Activated T-helper 1 cell treated with anti-CD3 and anti-CD28 coated beads, Interleukin-12 subunit alpha, Interleukin-12 subunit beta, Interleukin-2, Interleukin-4 antibody, amounts not matched to agents 30 ng/mL and 10 ng/mL and 1 ng/mL, durations not matched to agents 14 hours and 24 hours and 36 hours (primary cell): ENCODE measurements at regions of chr9 and their contacts with region 1.

Region 1: DNA sequence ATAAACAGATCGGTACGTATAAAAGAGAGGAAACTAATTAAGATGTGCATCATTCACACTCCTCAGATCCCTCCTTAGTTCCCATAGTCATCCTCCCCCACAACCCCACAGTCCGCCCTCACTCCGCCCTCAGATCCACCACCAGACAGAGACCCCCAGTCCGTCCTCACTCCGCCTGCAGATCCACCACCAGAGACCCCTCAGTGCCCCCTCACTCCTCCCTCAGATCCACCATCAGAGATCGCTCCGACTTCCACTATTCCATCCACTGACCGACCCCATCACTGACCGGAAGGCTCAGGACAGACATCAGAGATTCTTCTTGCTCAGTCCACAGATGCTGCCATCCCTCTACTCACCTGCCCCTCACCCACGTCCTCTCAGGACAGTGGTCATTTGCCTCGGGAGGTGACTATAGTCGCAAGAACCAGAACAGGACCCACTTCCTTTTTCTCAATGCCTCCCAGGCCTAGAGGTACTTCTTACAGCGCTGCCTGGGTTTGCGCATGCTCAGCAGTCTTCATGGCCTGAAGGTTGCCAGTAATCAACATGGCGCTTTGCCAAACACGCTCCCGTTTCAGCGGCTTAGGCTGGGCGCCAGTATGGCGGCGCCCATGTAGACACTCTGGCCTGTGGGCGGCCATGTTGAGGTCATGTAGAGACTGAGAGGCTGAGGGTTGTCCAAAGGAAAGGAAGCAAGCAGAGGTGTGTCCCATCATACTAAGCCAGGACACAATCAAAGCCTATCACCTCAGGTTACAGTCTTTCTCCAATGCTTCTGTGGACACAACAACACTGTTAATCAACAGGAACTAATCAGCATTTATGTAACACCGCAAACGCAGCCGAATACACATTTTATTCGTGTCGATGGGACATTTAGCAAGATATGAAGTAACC is at the start of gene ZNF484:
- DNase-seq: peak; percentile 92
- H3K4me3 Mint-ChIP-seq: peak within 1 kb of the TSS; percentile 92
- H3K27ac Mint-ChIP-seq: peak within 1 kb of the TSS; percentile 97
- H3K4me1 Mint-ChIP-seq: peaks cover 46% of the 10 kb centered on the region
- H3K27me3 Mint-ChIP-seq: peaks cover 4% of the 10 kb centered on the region
- total RNA-seq, gene ZNF484: 7.2 and 8.1 TPM in 2 replicates

Region 2: GRCh38 chr9:92115071-92115858 is 762.5 kb before region 1 on chr9 and contains the start of gene SPTLC1:
- intact Hi-C with region 1: loop called (anchors 5 kb)
- DNase-seq: peak; percentile 93
- H3K4me3 Mint-ChIP-seq: peak within 1 kb of the TSS; percentile 97
- H3K27ac Mint-ChIP-seq: peak within 1 kb of the TSS; percentile 95
- H3K4me1 Mint-ChIP-seq: peaks cover 47% of the 10 kb centered on the region
- H3K27me3 Mint-ChIP-seq: no peaks in the 10 kb centered on the region
- total RNA-seq, gene SPTLC1: 60.2 and 62.3 TPM in 2 replicates

Region 3: DNA sequence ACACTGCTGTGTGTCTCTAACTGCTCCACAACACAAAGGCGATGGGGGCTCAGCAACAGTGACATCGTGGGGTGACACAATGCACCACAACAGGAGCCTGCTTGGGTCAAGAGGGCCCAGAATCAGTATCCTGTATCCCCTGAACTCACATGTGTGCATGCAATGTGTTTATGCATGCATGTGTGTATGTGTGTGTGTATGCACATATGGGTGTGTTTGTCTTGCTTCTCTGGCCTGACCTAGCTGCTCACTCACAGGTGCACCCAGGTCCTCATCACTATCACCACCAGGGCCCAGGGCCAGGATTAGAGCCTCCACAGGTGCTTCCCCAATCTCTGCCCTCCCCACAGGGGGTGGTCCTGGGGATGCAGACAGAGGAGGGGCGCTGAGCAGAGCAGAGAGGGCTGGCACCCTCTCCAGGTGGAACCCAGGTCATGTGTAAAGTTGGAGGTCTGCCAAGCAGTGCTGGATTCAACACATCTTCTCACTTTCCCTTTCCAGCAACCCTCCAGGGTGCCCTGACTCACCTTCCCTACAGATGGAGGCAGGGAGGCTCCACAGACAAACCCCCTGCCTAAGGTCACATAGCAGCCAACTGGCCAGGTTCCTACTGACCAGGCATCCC is 18.1 kb after region 1 on chr9:
- intact Hi-C with region 1: no loop called
- DNase-seq: no peak
- H3K4me3 Mint-ChIP-seq: no peak overlapping the region
- H3K27ac Mint-ChIP-seq: no peak overlapping the region
- H3K4me1 Mint-ChIP-seq: peaks cover 9% of the 10 kb centered on the region
- H3K27me3 Mint-ChIP-seq: peaks cover 10% of the 10 kb centered on the region

Region 4: DNA sequence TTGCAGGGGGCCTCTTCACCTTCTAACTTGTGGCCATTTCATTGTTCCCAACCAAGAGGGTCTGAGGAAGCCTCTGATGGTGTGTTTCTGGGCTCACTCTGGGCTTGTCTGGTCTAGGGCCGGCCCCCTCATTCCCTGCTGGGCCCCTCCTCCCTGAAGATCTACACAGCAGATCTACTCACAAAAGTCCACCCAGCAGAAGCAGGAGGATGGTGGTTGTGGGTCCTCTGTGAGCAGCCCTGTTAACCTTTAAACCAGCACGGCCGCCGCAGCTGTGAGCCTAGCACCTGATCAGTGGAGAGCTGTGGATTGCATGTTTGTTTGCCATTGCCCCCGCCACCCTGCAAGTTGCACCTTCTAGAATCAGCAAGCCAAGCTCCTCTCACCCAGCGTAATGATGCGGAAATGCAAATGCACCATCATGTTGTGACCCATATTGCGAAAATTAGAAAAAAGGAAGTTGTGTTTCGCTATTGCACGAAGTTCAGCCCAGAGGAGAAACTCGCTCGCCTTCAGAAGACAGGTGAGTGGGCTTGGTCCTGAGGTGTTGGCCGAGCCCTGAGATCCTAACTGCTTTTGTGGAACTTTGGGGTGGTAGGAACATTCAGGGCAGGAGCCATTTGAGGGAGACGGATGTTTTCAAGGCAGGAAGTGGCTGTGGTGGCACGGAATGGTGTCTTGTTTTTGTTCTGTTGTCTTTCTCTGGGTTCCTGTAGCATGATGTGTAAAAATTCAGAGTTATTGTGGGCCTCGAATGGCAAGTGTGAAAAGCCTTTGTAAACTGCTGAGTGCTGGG is 86.2 kb after region 1 on chr9:
- intact Hi-C with region 1: loop called (anchors 5 kb)
- DNase-seq: peak; percentile 77
- H3K4me3 Mint-ChIP-seq: peak overlapping the region; percentile 98
- H3K27ac Mint-ChIP-seq: peak overlapping the region; percentile 97
- H3K4me1 Mint-ChIP-seq: peaks cover 69% of the 10 kb centered on the region
- H3K27me3 Mint-ChIP-seq: no peaks in the 10 kb centered on the region

Region 5: DNA sequence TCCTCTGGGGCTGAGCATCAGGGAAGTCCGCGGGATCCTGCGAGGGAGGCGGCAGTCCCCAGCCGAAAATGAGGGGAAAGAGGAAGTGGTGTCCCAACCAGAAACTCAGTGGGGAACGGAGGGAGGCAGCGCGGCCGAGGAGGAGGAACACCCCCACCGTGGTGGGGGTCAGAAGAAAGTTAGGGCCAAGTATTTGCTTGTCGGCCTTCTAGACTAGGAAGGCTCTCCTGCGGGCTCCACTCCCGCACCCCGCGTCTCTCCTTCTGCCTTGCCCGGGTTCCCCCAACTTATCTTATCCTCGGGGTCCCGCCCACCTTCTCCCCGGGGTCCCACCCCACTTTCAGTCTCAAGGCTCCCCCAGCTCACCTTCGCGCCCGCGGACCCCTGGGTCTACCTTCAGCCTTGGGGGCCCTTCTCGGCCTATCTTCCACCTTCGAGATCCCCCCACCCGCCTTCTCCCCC is 698.0 kb after region 1 on chr9:
- intact Hi-C with region 1: loop called (anchors 5 kb)
- DNase-seq: peak; percentile 36
- H3K4me3 Mint-ChIP-seq: peak overlapping the region; percentile 88
- H3K27ac Mint-ChIP-seq: peak overlapping the region; percentile 92
- H3K4me1 Mint-ChIP-seq: peaks cover 28% of the 10 kb centered on the region
- H3K27me3 Mint-ChIP-seq: no peaks in the 10 kb centered on the region